WTC11 (cell line): ENCODE measurements at regions of chr1 and their contacts with region 1.

Region 1: GRCh38 chr1:39098546-39099250 is 72.5 kb downstream of the NDUFS5 start:
- DNase-seq: peak; percentile 76
- ATAC-seq: peak; percentile 85
- H3K4me3 Mint-ChIP-seq: no peak overlapping the region
- H3K27ac Mint-ChIP-seq: peak overlapping the region; percentile 83; the same call in 1 of the 2 replicates
- H3K4me1 Mint-ChIP-seq: peaks cover 21% of the 10 kb centered on the region
- H3K27me3 Mint-ChIP-seq: no peaks in the 10 kb centered on the region
- CTCF ChIP-seq: peak; percentile 42; the same call in 1 of the 2 replicates

Region 2: DNA sequence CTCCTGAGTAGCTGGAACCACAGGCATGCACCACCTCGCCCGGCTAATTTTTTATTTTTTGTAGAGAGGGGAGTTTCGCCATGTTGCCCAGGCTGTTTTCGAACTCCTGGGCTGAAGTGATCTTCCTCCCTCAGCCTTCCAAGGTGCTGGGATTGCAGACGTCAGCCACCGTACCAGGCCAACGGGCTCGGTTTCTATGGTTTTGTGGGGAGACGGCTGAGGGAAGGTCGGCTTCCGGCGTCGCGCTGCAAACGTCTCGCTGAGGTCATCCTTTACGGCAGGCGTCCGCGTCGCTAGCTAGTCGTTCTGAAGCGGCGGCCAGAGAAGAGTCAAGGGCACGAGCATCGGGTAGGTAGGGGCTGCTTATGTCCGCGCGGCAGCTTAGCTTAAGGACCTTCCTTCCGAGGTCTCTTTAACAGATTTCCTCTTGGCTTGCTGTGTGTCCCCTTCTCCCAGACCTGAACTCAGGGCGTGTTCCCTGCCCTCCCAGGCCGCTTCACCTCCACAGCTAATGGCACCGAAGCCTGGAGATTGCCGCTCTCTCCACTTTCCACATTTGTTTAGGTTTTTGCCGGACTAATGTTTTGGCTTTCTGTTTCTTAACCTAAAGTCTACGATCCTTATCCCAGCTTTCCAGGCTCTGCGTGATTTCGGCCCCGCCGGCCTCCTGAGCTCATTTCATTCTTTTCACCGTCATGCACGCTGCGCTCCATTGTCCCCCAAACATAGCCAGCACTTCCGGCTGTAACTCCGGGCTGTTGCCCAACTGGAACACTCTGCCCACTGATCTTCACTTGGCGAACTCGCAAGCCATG is 72.4 kb before region 1 on chr1 and contains the start of gene NDUFS5:
- CTCF ChIA-PET with region 1: no interaction called
- POLR2A ChIA-PET with region 1: no interaction called
- DNase-seq: peak; percentile 88
- ATAC-seq: peak; percentile 92
- H3K4me3 Mint-ChIP-seq: peak within 1 kb of the TSS; percentile 94
- H3K27ac Mint-ChIP-seq: peak within 1 kb of the TSS; percentile 100
- H3K4me1 Mint-ChIP-seq: peaks cover 9% of the 10 kb centered on the region
- H3K27me3 Mint-ChIP-seq: peaks cover 3% of the 10 kb centered on the region; the same call in 1 of the 2 replicates
- CTCF ChIP-seq: no peak
- total RNA-seq, gene NDUFS5: 402 to 430 TPM (median 414 TPM) in 3 replicates

Region 3: DNA sequence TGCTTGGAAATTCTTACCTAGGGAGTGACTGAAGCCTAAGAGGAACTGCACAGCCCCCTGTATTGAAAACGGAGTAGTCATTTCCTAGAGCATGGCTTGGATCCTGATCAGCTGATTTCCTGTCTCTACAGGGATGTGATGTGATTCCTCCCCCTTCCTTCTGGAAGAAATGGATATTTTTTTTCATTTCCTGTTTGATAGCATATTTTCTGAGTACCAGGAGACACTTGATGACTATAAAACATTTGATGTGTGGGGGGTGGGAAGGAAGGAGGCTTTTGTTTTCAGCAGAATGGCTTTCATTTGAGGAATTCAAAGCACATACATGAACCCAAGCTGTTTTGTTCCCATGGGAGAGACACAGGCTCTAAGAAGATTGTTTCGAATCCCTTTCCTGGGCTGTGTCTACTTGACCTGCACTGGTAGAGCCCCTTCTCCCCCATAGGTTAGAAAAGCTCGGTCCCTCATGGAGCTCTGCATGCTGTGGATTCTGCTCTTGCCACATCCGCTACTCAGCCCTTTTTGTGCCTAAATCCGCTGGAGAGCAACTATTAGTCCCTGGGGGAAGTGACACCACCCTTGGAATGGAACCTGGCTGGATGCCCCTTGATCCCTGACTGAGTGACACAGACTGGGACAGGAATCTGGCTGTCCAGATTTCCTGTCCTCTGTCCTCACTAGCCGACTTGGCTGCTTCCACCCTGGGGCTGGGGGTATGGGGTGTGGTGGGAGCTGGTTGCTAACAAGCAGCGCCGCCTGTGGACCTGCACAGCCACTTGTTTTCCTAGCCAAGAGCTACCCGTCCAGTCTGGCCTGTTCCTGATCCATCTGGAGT is 34.0 kb after region 1 on chr1:
- CTCF ChIA-PET with region 1: interaction called, 36 read pairs
- POLR2A ChIA-PET with region 1: interaction called, 3 read pairs
- DNase-seq: peak; percentile 88
- ATAC-seq: peak; percentile 92
- H3K4me3 Mint-ChIP-seq: peak overlapping the region; percentile 34
- H3K27ac Mint-ChIP-seq: peak overlapping the region; percentile 98
- H3K4me1 Mint-ChIP-seq: peaks cover 67% of the 10 kb centered on the region
- H3K27me3 Mint-ChIP-seq: no peaks in the 10 kb centered on the region
- CTCF ChIP-seq: no peak

Region 4: GRCh38 chr1:39189592-39190041 is 90.9 kb after region 1 on chr1:
- CTCF ChIA-PET with region 1: interaction called, 131 read pairs
- POLR2A ChIA-PET with region 1: interaction called, 5 read pairs
- DNase-seq: no peak
- ATAC-seq: no peak
- H3K4me3 Mint-ChIP-seq: no peak overlapping the region
- H3K27ac Mint-ChIP-seq: peak overlapping the region; percentile 24
- H3K4me1 Mint-ChIP-seq: peaks cover 71% of the 10 kb centered on the region
- H3K27me3 Mint-ChIP-seq: no peaks in the 10 kb centered on the region
- CTCF ChIP-seq: no peak

Region 5: DNA sequence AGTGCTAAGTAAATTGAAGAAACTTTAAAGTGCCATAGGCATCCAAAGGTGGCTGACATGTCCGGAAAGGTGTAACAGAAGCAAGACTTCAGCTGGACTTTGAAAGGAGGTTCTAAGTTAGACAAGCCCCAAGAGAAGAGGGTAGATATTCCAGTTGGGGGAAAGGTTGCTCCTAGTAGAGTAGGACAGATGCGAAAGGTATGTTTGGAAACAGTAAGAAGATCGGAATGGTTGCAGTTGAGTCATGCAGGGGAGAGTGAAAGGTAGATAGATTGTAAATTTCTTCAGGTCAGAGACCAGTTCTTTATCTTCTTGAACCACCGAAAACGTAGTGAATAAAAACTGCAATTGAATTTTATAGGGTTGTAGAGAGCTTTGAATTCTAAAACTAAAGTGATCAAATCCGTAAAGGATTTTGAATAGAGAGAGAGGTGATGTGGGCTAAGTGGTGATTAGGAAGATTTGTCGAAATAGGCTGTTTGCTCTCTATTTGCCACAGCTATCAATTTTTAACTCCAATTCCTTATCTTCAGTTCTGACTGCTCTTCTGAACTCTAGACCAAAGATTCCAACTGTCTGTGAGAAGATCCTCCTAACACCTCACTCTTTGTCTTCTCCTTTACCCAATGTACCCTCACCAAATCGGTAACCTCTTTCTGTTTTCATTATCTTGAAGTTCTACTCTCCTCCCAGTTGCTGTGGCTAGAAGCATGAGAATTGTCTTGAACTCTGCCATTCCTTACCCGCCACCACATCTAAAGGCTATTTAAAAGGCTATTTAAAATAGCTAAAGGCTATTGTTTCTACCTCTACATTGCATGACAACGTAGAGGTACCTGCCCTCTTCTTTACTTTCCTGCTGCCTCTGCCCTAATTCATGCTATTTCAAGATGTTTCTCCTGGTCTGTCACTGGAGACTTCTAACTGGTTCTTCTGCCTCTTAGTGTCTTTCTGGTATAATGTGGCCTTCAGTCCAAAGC is 122.5 kb after region 1 on chr1:
- CTCF ChIA-PET with region 1: interaction called, 20 read pairs
- POLR2A ChIA-PET with region 1: no interaction called
- DNase-seq: no peak
- ATAC-seq: peak; percentile 86
- H3K4me3 Mint-ChIP-seq: peak overlapping the region; percentile 17; the same call in 1 of the 2 replicates
- H3K27ac Mint-ChIP-seq: peak overlapping the region; percentile 83
- H3K4me1 Mint-ChIP-seq: peaks cover 38% of the 10 kb centered on the region
- H3K27me3 Mint-ChIP-seq: no peaks in the 10 kb centered on the region
- CTCF ChIP-seq: no peak

Region 6: DNA sequence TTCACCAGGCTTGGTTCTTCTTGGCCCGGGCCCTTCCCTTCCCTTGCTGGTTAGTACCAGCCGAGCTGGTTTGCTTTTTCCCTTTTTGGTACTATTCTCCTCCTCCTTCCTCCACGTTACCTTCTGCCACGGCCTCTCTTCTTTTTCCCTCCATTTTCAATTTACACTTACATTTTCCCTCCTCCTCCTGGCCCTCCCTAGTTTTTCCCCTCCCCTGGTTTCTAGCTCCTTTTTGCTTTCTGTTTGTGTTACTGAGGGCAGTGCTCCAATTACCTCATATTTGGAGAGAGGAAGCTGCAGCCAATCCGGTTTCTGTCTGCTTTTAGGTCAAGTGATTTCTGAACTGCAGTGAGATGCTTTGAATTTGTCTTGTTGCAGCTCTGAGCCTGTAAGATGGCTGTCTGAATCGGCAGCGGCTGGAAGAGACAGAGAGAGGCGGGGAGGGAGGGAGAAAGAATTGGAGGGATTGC is 169.4 kb after region 1 on chr1:
- CTCF ChIA-PET with region 1: interaction called, 18 read pairs
- POLR2A ChIA-PET with region 1: no interaction called
- DNase-seq: peak; percentile 24
- ATAC-seq: peak; percentile 14
- H3K4me3 Mint-ChIP-seq: peak overlapping the region; percentile 66
- H3K27ac Mint-ChIP-seq: peak overlapping the region; percentile 98
- H3K4me1 Mint-ChIP-seq: peaks cover 73% of the 10 kb centered on the region
- H3K27me3 Mint-ChIP-seq: no peaks in the 10 kb centered on the region
- CTCF ChIP-seq: no peak

Region 7: DNA sequence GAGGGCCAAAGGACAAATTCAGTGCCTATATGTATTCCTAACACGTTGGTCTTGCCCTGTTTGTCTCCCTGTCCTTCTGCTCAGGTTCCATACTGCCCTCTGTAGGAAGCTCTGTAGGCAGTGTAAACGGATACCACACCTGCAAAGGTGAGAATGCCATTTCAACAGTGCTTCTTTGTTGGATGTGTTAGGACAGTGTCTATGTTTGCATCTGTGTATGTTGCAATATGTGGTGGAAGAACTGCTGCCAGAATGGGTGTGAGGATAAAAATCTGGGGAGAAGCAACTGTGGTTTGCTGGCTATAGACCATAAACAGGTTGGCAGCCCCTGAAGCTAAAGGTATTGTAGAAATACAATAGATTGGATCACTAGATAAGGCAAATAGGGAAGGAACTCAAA is 279.7 kb after region 1 on chr1:
- CTCF ChIA-PET with region 1: interaction called, 15 read pairs
- POLR2A ChIA-PET with region 1: no interaction called
- DNase-seq: peak; percentile 26
- ATAC-seq: peak; percentile 97
- H3K4me3 Mint-ChIP-seq: no peak overlapping the region
- H3K27ac Mint-ChIP-seq: no peak overlapping the region
- H3K4me1 Mint-ChIP-seq: no peaks in the 10 kb centered on the region
- H3K27me3 Mint-ChIP-seq: no peaks in the 10 kb centered on the region
- CTCF ChIP-seq: no peak

Region 8: DNA sequence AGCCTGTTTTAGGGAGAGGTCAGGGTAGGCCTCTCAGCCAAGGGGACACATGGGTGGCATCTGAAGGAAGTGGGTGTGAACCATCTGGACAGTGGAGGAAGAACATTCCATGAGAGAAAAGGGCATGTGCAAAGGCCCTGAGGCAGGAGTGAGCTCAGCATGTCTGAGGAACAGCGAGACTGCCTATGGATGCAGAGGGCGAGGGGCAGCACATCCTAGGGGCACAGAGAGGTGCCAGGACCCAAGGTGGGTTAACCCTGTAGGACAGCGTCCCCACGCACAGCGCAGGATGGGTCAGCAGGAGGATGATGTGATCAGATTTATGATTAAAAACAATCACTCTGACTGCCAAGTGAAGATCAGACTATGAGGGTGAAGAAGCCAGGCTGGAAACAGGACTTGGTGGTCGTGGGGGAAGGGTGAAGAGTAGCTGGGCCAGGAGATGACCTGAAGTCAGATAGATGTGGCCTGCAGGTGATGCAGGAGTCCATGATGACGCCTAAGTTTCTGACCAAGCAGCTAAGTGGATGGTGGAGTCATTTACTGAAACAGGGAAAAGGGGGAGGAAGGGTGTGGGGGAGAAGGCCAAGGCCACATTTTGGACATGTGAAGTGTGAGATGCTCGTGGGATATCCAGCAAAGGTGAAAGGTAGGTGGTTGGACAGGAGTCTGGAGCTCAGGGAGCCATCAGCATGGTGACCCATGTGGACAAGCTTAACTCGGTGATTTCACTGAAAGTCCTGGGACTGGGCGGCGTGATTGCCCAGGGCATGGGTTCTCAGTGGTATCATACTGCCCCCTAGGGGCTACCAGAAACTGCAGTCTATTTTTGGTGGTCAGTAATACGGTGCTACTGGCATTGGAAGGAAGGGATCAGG is 440.1 kb after region 1 on chr1:
- CTCF ChIA-PET with region 1: interaction called, 34 read pairs
- POLR2A ChIA-PET with region 1: no interaction called
- DNase-seq: peak; percentile 72
- ATAC-seq: peak; percentile 99
- H3K4me3 Mint-ChIP-seq: no peak overlapping the region
- H3K27ac Mint-ChIP-seq: peak overlapping the region; percentile 13; the same call in 1 of the 2 replicates
- H3K4me1 Mint-ChIP-seq: no peaks in the 10 kb centered on the region
- H3K27me3 Mint-ChIP-seq: no peaks in the 10 kb centered on the region
- CTCF ChIP-seq: peak; percentile 89